ENCODE measurements at regions of chr10 and their contacts with region 1.

Region 1: GRCh38 chr10:4849555-4850242 is 23.7 kb downstream of the AKR1E2 start:
- DNase-seq: peak; percentile 91 to 98
- H3K4me3 ChIP-seq: no peak overlapping the region
- CTCF ChIP-seq: peak in 1 of 3 donors; percentile 99
- POLR2A ChIP-seq: no peak

Region 2: DNA sequence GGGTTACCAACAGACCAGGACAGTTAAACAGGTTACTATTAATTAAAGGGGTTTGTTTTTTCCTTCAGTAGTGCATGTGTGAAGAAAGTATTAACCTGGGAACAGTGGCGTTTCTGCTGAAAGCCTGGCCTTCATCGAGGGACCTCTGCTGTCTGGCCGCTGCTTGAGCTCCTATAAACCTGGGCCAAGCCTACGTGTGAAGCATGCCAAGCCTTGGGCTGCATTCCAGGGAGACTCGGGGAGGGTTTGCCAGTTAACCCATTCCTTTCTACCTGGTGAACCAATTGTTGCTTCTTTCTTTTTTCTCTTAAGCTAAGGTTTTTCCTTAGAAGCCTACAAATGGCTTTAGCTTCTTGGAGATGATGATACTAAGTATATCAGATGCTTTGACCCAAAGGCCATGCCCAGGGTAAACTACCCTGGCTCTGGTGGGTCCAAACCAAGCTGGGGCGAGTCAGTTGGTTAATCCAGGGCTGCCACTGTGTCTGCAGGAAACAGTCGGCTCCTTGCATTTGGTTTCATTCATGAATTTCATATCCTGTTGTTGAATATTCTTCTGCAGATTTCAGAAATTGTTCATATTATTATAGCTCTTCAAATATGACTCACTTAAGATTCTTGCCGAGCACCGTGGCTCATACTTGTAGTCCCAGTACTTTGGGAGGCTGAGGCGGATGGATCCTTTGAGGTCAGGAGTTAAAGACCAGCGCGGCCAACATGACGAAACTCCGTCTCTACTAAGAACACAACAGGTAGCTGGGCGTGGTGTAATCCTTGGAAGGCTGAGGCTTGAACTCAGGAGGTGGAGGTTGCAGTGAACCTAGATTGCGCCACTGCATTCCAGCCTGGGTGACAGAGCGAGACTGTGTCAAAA is 1758.5 kb before region 1 on chr10:
- intact Hi-C with region 1: no loop called
- DNase-seq: no peak
- H3K4me3 ChIP-seq: no peak overlapping the region
- CTCF ChIP-seq: no peak
- POLR2A ChIP-seq: no peak

Region 3: DNA sequence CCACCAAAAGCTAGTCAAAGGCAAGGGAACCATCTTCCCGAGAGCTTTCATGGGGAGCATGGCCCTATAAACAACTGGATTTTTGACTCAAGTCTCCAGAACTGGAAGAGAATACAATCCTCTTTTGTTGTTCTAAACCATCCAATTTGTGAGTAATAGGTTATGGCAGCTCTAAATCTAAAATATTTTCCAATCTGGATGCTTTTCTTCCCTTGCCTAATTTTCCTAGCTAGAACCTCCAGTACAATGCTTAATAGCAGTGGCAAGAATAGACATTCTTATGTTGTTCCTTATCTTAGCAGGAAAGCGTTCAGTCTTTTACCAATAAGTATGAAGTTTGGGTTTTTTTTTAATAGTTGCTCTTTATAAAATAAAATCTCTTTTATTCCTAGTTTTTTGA is 43.0 kb after region 1 on chr10:
- intact Hi-C with region 1: no loop called
- DNase-seq: no peak
- H3K4me3 ChIP-seq: no peak overlapping the region
- CTCF ChIP-seq: no peak
- POLR2A ChIP-seq: no peak

Region 4: DNA sequence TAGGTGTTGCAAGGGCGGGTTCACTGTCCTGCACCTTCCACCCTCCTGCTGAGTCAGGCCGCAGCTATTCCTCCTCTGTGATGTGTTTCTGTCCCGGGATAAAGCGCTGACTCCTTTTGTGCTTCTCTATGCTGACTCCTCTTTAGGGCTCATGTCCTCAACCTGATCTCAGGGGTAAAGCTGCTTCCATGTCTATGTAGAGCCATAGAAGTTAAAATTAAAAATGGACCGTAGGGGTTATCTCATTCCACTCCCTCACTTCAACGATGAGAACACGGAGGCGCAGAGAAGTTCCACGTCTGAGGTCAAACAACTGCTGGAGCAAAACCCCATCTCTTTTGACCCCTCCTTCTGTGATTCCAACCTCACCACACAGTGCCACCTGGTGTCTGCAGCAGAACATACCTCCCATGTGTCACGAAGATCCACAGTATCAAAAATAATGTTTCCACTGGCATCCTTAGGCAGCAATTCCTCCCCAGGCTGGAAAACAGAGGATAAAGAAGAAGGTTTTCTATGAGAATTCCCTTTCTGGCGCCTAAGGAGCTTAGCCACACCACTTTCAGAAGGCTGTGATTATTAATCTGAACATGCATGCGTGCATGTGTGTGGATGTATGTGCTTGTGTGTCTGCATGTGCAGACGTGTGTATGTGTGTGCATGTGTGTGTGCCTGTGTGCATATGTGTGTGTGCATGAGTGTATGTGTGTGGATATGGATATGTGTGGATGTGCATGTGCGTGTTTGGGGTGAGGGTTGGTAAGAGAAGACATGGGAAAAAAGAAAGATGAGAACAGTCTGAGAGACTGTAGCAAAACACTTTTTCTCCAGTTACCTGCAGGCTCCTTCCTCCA is 433.8 kb after region 1 on chr10:
- intact Hi-C with region 1: loop called (anchors 5 kb)
- DNase-seq: peak; percentile 59 to 85
- H3K4me3 ChIP-seq: no peak overlapping the region
- CTCF ChIP-seq: peak in 1 of 3 donors; percentile 6
- POLR2A ChIP-seq: no peak

Region 5: GRCh38 chr10:5385224-5385623 is 535.5 kb after region 1 on chr10:
- intact Hi-C with region 1: loop called (anchors 10 kb)
- DNase-seq: no peak
- H3K4me3 ChIP-seq: no peak overlapping the region
- CTCF ChIP-seq: no peak
- POLR2A ChIP-seq: no peak

Region 6: DNA sequence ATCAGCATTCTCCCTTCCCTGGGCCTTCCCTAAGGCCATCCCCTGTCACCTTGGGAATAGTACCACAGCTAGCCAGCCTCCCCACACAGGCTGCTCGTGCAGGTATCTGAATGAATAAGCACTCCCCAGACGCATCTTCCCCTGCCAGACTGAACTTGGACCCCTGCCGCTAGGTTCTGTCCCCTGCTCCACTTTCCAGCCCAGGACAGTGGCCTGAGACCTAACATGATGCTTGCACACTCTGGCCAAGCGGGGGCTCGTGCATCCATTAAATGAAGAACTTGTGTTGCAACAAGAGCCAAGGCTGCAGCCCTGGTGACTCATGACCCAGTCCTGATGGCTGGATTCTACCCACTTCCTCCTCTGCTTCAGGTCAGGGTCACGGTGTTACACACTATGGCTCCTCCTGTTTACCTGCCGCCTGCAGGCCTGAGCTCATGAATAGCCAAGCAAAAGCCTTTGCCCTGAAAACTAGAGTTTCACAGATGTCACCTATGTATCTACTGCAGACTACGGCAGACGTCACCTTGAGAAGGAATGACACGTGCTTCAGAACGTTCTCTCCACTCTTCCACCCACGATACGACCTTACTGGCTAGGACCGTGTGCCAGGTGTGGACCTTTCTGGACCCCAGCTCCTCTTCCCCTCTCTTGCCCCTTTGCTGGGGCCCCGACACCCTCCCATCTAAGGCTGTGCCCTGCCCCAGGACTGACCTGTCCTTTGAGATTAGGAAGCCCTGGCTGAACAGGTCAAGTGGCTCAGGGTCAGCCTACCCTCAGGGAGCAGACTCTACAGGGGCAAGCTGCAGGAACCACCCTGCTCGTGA is 810.2 kb after region 1 on chr10:
- intact Hi-C with region 1: loop called (anchors 10 kb)
- DNase-seq: peak; percentile 55 to 84
- H3K4me3 ChIP-seq: no peak overlapping the region
- CTCF ChIP-seq: peak in 1 of 3 donors; percentile 21
- POLR2A ChIP-seq: no peak